Naive thymus-derived CD8-positive, alpha-beta T cell (primary cell): ENCODE measurements at regions of chr10 and their contacts with region 1.

Region 1: DNA sequence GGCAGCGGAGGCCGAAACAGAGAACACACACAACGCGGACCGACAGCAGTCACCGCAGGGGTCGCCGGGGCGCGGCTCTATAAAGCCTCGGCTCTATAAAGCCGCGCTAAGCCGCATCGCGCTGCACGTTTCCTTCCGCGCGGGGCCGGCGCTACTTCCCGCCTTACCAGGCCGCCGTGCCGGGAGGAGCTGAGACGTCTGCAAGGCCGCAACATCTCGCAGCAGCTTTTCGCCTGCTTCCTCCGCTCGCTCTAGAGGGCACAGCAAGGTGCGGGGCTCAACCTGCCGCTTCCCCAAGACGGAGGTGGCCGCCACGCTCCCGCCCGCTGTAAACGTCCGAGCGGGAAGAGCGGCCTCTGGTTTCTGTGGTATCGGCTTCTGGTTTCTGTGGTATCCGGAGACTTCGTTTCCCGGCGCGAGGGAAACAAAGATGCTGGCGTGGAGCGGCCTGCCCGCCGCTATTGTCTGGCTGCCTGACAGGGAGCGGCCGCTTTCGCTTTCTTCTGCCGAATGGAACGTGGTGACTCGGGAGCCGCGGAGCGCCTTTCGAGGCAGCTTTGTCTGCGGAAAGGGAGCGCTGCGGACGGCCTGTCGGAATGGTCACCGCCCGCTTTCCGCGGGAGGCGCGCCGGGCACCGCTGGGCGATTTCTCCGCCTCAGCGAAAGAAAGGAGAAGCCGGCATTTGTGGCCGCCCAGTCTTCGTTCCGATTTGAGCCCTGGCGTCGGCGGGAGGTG is 91.8 kb downstream of the SPAG6 start:
- DNase-seq: peak; percentile 78 to 95 (median 90)
- ATAC-seq: peak; percentile 86
- H3K4me3 Mint-ChIP-seq: peak overlapping the region; percentile 90 to 99 (median 95)
- H3K27ac Mint-ChIP-seq: peak overlapping the region; percentile 97 to 99 (median 98)
- H3K4me1 Mint-ChIP-seq: peaks cover 17 to 36% (median 32%) of the 10 kb centered on the region in 4 donors
- H3K27me3 Mint-ChIP-seq: peaks cover 0 to under 1% (median 0%) of the 10 kb centered on the region in 5 donors

Region 2: GRCh38 chr10:22228943-22229801 is 207.9 kb before region 1 on chr10:
- POLR2A ChIA-PET with region 1: interaction called, 34 read pairs
- DNase-seq: peak; percentile 77 to 97 (median 90)
- ATAC-seq: peak; percentile 81 to 83
- H3K4me3 Mint-ChIP-seq: peak overlapping the region; percentile 89 to 98 (median 94)
- H3K27ac Mint-ChIP-seq: peak overlapping the region; percentile 91 to 100 (median 97)
- H3K4me1 Mint-ChIP-seq: peaks cover 10 to 22% (median 16%) of the 10 kb centered on the region in 4 donors
- H3K27me3 Mint-ChIP-seq: peaks cover 0 to 3% (median 3%) of the 10 kb centered on the region in 5 donors

Region 3: GRCh38 chr10:22316285-22317120 is 120.5 kb before region 1 on chr10 and contains the start of gene COMMD3:
- POLR2A ChIA-PET with region 1: interaction called, 62 read pairs
- DNase-seq: peak; percentile 63 to 86 (median 75)
- ATAC-seq: peak; percentile 63 to 64
- H3K4me3 Mint-ChIP-seq: peak within 1 kb of the TSS; percentile 88 to 99 (median 93)
- H3K27ac Mint-ChIP-seq: peak within 1 kb of the TSS; percentile 93 to 98 (median 96)
- H3K4me1 Mint-ChIP-seq: peaks cover 6 to 48% (median 20%) of the 10 kb centered on the region in 4 donors
- H3K27me3 Mint-ChIP-seq: peaks cover 0 to 18% (median 11%) of the 10 kb centered on the region in 5 donors
- polyA plus RNA-seq, gene COMMD3: 38.5 to 57.8 (median 48.4) TPM

Region 4: GRCh38 chr10:22340362-22341189 is 96.5 kb before region 1 on chr10:
- POLR2A ChIA-PET with region 1: interaction called, 30 read pairs
- DNase-seq: peak in 9 of 10 donors; percentile 30 to 74 (median 53)
- ATAC-seq: peak; percentile 45 to 48
- H3K4me3 Mint-ChIP-seq: peak overlapping the region; percentile 70 to 91 (median 84)
- H3K27ac Mint-ChIP-seq: peak overlapping the region; percentile 39 to 90 (median 84)
- H3K4me1 Mint-ChIP-seq: peaks cover 2 to 38% (median 14%) of the 10 kb centered on the region in 4 donors
- H3K27me3 Mint-ChIP-seq: peaks cover 21 to 74% (median 71%) of the 10 kb centered on the region in 5 donors

Region 5: GRCh38 chr10:22453948-22454591 is 17.0 kb after region 1 on chr10:
- POLR2A ChIA-PET with region 1: interaction called, 17 read pairs
- DNase-seq: no peak
- ATAC-seq: no peak
- H3K4me3 Mint-ChIP-seq: no peak overlapping the region
- H3K27ac Mint-ChIP-seq: no peak overlapping the region
- H3K4me1 Mint-ChIP-seq: peaks cover 0 to 11% (median 6%) of the 10 kb centered on the region in 4 donors
- H3K27me3 Mint-ChIP-seq: peaks cover 0 to 15% (median 5%) of the 10 kb centered on the region in 5 donors